ENCODE measurements at regions of chr2 and their contacts with region 1.

Region 1: DNA sequence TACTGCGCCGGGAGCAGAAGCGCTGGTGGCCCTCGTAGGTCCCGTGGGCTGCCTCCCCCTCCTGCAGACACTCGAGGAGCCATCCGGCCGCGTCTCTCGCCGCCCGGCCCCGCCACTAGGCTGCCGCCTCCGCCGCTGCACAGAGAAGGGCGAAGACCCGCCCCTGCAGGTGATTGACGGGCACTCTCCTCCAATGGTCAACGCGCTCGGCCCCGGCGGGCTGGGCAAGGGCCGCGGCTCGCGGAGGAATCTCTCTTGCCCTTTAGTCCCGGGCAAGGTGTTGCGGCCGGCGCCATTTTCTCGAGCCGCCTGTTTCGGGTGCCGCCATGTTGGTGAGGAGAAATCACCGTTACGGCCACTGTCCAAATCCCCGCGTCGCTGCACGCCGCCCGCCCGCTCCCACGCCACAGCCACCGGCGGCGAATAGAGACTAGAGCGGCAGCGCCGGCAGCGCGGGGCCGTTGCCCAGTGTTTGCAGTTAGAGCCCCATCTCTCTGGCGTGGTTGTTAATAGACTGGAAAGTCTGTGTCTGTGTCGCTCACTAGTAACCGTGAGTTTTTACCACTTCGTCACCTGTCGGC is at the start of gene ZC3H6:
- DNase-seq: peak; percentile 100
- ATAC-seq: peak; percentile 89
- H3K4me3 ChIP-seq: peak within 1 kb of the TSS; percentile 85 to 99 (median 97)
- H3K4me3 Mint-ChIP-seq: peak within 1 kb of the TSS; percentile 96
- H3K27ac ChIP-seq: peak within 1 kb of the TSS; percentile 99 to 100
- H3K27ac Mint-ChIP-seq: peak within 1 kb of the TSS; percentile 100
- H3K4me1 ChIP-seq: peaks cover 4 to 10% of the 10 kb centered on the region in 2 donors
- H3K4me1 Mint-ChIP-seq: peaks cover 15% of the 10 kb centered on the region
- H3K27me3 ChIP-seq: no peaks in the 10 kb centered on the region
- H3K27me3 Mint-ChIP-seq: no peaks in the 10 kb centered on the region
- CTCF ChIP-seq: no peak
- total RNA-seq, gene ZC3H6: 16.6 and 21.9 TPM in 2 replicates

Region 2: DNA sequence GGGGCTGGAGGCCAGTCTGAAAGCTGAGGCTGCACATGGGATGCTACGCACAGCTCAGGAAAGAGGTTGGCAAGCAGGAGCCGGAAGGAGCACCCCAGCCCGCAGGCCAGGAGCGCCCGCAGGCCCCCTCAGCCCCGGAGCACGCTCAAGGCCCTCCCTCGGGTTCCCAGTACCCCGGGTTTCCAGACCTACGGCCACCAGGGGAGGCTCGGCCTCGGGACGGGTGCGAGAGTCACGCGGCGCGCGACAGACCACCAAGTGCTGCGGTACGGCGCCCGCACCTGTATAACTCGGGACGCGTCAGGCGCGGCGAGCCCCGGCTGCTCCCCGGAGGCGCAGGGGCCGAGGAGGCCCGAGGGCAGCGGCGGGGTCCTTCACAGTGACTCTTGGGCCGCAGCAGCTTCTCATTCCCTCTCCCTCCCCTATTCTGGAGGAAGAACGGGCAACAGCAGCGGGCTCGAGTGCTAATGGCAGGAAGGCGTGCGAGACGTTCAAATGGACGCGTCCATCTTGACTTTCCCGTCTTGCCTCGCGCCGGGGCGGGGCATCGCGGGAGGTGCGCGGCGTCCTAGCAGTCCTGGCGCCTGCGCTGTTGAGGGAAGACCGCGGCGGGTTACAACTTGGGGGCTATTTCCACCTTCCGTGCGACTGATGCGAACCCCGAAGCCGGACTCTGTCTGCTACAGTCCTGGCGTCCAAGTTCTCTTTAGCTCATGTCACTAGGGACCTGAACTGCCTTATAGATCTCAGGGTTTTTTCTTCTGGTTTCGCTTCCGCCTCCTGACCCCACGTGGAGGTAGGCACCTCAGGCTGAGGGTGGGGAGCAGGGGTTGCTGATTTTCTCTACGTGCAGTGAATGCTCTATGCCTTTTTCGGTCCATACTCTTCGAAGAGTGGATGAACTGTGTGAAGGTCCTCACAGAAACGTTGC is 391.5 kb before region 1 on chr2 and contains the start of gene ANAPC1:
- CTCF ChIA-PET with region 1: interaction called, 4 read pairs
- POLR2A ChIA-PET with region 1: no interaction called
- intact Hi-C with region 1: loop called (anchors 5 kb)
- DNase-seq: peak; percentile 92
- ATAC-seq: peak; percentile 93
- H3K4me3 ChIP-seq: peak within 1 kb of the TSS; percentile 50 to 94 (median 92)
- H3K4me3 Mint-ChIP-seq: peak within 1 kb of the TSS; percentile 95
- H3K27ac ChIP-seq: peak within 1 kb of the TSS; percentile 84 to 93
- H3K27ac Mint-ChIP-seq: peak within 1 kb of the TSS; percentile 98
- H3K4me1 ChIP-seq: peaks cover 10 to 18% of the 10 kb centered on the region in 2 donors
- H3K4me1 Mint-ChIP-seq: peaks cover 12% of the 10 kb centered on the region
- H3K27me3 ChIP-seq: no peaks in the 10 kb centered on the region
- H3K27me3 Mint-ChIP-seq: no peaks in the 10 kb centered on the region
- CTCF ChIP-seq: no peak
- total RNA-seq, gene ANAPC1: 59.4 and 69.3 TPM in 2 replicates

Region 3: GRCh38 chr2:112198780-112199179 is 76.6 kb before region 1 on chr2:
- CTCF ChIA-PET with region 1: no interaction called
- POLR2A ChIA-PET with region 1: no interaction called
- intact Hi-C with region 1: no loop called
- DNase-seq: no peak
- ATAC-seq: no peak
- H3K4me3 ChIP-seq: no peak overlapping the region
- H3K4me3 Mint-ChIP-seq: no peak overlapping the region
- H3K27ac ChIP-seq: no peak overlapping the region
- H3K27ac Mint-ChIP-seq: no peak overlapping the region
- H3K4me1 ChIP-seq: no peaks in the 10 kb centered on the region
- H3K4me1 Mint-ChIP-seq: peaks cover 5% of the 10 kb centered on the region
- H3K27me3 ChIP-seq: peaks cover 0 to 6% (median 0%) of the 10 kb centered on the region in 4 experiments
- H3K27me3 Mint-ChIP-seq: peaks cover 4% of the 10 kb centered on the region
- CTCF ChIP-seq: no peak

Region 4: GRCh38 chr2:112254466-112255239 is 20.7 kb before region 1 on chr2 and contains the start of gene ZC3H8:
- CTCF ChIA-PET with region 1: interaction called, 22 read pairs
- POLR2A ChIA-PET with region 1: interaction called, 6 read pairs
- intact Hi-C with region 1: loop called (anchors 1 kb)
- DNase-seq: peak; percentile 95
- ATAC-seq: peak; percentile 89
- H3K4me3 ChIP-seq: peak within 1 kb of the TSS; percentile 72 to 84 (median 79)
- H3K4me3 Mint-ChIP-seq: peak within 1 kb of the TSS; percentile 93
- H3K27ac ChIP-seq: peak within 1 kb of the TSS; percentile 83 to 93
- H3K27ac Mint-ChIP-seq: peak within 1 kb of the TSS; percentile 92
- H3K4me1 ChIP-seq: peaks cover 9 to 17% of the 10 kb centered on the region in 2 donors
- H3K4me1 Mint-ChIP-seq: peaks cover 23% of the 10 kb centered on the region
- H3K27me3 ChIP-seq: no peaks in the 10 kb centered on the region
- H3K27me3 Mint-ChIP-seq: no peaks in the 10 kb centered on the region
- CTCF ChIP-seq: no peak
- total RNA-seq, gene ZC3H8: 26.0 and 27.2 TPM in 2 replicates

Region 5: GRCh38 chr2:112481050-112481527 is 205.7 kb after region 1 on chr2:
- CTCF ChIA-PET with region 1: interaction called, 3 read pairs
- POLR2A ChIA-PET with region 1: no interaction called
- intact Hi-C with region 1: loop called (anchors 1 kb)
- DNase-seq: peak; percentile 87
- ATAC-seq: peak; percentile 67
- H3K4me3 ChIP-seq: peak overlapping the region; percentile 84 to 96 (median 88)
- H3K4me3 Mint-ChIP-seq: peak overlapping the region; percentile 93
- H3K27ac ChIP-seq: peak overlapping the region; percentile 79 to 86
- H3K27ac Mint-ChIP-seq: peak overlapping the region; percentile 97
- H3K4me1 ChIP-seq: peaks cover 16 to 23% of the 10 kb centered on the region in 2 donors
- H3K4me1 Mint-ChIP-seq: peaks cover 18% of the 10 kb centered on the region
- H3K27me3 ChIP-seq: no peaks in the 10 kb centered on the region
- H3K27me3 Mint-ChIP-seq: no peaks in the 10 kb centered on the region
- CTCF ChIP-seq: peak; percentile 91

Region 6: GRCh38 chr2:112542123-112542983 is 267.0 kb after region 1 on chr2 and contains the start of gene POLR1B:
- CTCF ChIA-PET with region 1: no interaction called
- POLR2A ChIA-PET with region 1: no interaction called
- intact Hi-C with region 1: loop called (anchors 5 kb)
- DNase-seq: peak; percentile 88
- ATAC-seq: peak; percentile 80
- H3K4me3 ChIP-seq: peak within 1 kb of the TSS; percentile 65 to 99 (median 94)
- H3K4me3 Mint-ChIP-seq: no peak within 1 kb of the TSS
- H3K27ac ChIP-seq: peak within 1 kb of the TSS; percentile 85 to 94
- H3K27ac Mint-ChIP-seq: no peak within 1 kb of the TSS
- H3K4me1 ChIP-seq: peaks cover 15 to 18% of the 10 kb centered on the region in 2 donors
- H3K4me1 Mint-ChIP-seq: peaks cover 15% of the 10 kb centered on the region
- H3K27me3 ChIP-seq: no peaks in the 10 kb centered on the region
- H3K27me3 Mint-ChIP-seq: no peaks in the 10 kb centered on the region
- CTCF ChIP-seq: no peak
- total RNA-seq, gene POLR1B: 32.5 and 34.2 TPM in 2 replicates

Measured in B cell (primary cell).